PC-3 (cell line): ENCODE measurements at regions of chr3 and their contacts with region 1.

Region 1: GRCh38 chr3:184777336-184778004 is 34.5 kb upstream of the VPS8 start:
- DNase-seq: peak; percentile 94
- ATAC-seq: peak; percentile 96
- H3K4me3 ChIP-seq: no peak overlapping the region
- H3K27ac ChIP-seq: no peak overlapping the region
- H3K4me1 ChIP-seq: no peaks in the 10 kb centered on the region
- H3K27me3 ChIP-seq: no peaks in the 10 kb centered on the region
- CTCF ChIP-seq: peak; percentile 93

Region 2: GRCh38 chr3:184802150-184802549 is 24.7 kb after region 1 on chr3:
- CTCF ChIA-PET with region 1: no interaction called
- POLR2A ChIA-PET with region 1: interaction called, 4 read pairs
- intact Hi-C with region 1: loop called (anchors 2 kb)
- DNase-seq: no peak
- ATAC-seq: no peak
- H3K4me3 ChIP-seq: no peak overlapping the region
- H3K27ac ChIP-seq: no peak overlapping the region
- H3K4me1 ChIP-seq: no peaks in the 10 kb centered on the region
- H3K27me3 ChIP-seq: peaks cover 32% of the 10 kb centered on the region
- CTCF ChIP-seq: no peak

Region 3: DNA sequence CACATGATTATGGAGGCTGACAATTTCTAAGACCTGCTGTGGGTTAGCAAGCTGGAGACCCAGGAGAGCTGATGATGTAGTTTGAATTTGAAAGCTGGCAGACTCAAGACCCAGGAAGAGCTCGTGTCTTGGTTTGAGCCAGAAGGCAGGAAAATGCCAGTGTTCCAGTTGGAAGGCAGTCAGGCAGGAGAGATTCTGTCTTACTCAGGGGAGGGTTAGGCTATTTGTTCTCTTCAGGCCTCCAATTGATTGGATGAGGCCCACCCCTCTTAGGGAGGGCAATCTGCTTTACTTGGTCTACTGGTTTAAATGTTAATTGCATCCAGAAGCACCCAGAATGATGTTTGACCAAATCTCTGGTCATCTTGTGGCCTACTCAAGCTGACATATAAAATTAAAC is 1087.8 kb after region 1 on chr3:
- CTCF ChIA-PET with region 1: no interaction called
- POLR2A ChIA-PET with region 1: no interaction called
- intact Hi-C with region 1: no loop called
- DNase-seq: no peak
- ATAC-seq: no peak
- H3K4me3 ChIP-seq: no peak overlapping the region
- H3K27ac ChIP-seq: no peak overlapping the region
- H3K4me1 ChIP-seq: no peaks in the 10 kb centered on the region
- H3K27me3 ChIP-seq: no peaks in the 10 kb centered on the region
- CTCF ChIP-seq: no peak